Heart right ventricle (tissue), 16 donors: ENCODE measurements at regions of chr9 and their contacts with region 1.

Region 1: DNA sequence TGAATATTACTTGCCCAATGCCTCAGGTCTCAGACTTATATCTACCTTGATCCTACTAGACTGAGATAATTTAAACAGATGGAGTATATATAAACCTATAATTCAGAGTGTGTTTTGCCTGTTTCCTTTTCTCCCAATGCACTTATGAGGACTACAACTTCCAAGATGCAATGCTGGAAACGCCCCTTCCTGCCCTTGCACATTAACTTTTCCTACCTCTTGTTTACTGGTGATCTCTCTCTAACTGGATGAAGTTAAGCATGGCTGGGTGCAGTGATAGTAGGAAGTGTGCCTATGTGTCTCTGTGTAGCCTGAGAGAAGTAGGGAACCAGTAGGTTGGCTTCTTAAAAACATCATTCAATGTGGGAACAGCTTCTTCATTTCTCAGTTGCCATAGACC is 115.2 kb downstream of the SVEP1 start:
- DNase-seq: no peak
- ATAC-seq: no peak
- H3K4me3 ChIP-seq: no peak overlapping the region
- H3K27ac ChIP-seq: no peak overlapping the region
- H3K4me1 ChIP-seq: no peaks in the 10 kb centered on the region
- H3K27me3 ChIP-seq: no peaks in the 10 kb centered on the region
- CTCF ChIP-seq: no peak

Region 2: GRCh38 chr9:110591526-110591925 is 127.2 kb after region 1 on chr9:
- intact Hi-C with region 1: loop called in 2 of 10 experiments (anchors 5 to 10 kb)
- DNase-seq: no peak
- ATAC-seq: no peak
- H3K4me3 ChIP-seq: no peak overlapping the region
- H3K27ac ChIP-seq: no peak overlapping the region
- H3K4me1 ChIP-seq: no peaks in the 10 kb centered on the region
- H3K27me3 ChIP-seq: peaks cover 0 to 6% (median 0%) of the 10 kb centered on the region in 7 donors
- CTCF ChIP-seq: no peak